ENCODE measurements at regions of chr6 and their contacts with region 1.

Region 1: GRCh38 chr6:122471107-122472021 is at the start of gene SERINC1:
- DNase-seq: peak; percentile 95
- ATAC-seq: peak; percentile 97
- H3K4me3 Mint-ChIP-seq: peak within 1 kb of the TSS; percentile 96
- H3K27ac Mint-ChIP-seq: peak within 1 kb of the TSS; percentile 100
- H3K4me1 Mint-ChIP-seq: peaks cover 31% of the 10 kb centered on the region
- H3K27me3 Mint-ChIP-seq: no peaks in the 10 kb centered on the region
- total RNA-seq, gene SERINC1: 35.2 to 46.3 TPM

Region 2: DNA sequence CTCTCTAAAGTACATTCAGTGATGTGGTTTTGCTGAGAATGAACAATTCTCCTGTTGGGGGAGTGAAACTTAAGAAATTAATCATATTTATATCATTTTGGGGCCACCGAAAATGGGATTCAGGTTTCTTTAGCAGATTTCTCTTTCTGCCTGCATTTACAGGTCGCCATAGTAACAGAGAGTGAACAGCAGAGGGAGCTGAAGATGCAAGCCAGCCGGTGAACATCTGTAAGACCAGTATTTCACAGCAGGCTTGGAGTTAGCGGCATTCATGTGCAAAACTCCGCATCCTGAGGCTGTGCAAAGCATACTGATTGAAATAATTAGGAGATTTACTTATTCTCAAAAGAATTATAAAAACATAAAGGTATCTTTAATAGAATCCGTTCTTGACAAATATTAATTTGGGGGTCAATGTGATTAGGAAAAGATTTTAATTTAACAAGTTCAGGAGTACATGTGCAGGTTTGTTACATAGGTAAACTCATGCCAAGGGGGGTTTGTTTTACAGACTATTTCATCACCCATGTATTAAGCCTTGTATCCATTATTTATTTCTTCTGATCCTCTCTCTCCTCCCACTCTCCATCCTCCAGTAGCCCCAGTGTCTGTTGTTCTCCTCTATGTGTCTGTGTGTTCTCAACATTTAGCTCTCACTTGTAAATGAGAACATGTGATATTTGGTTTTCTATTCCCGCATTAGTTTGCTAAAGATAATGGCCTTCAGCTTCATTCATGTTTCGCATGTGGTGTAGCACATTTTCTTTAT is 89.7 kb before region 1 on chr6:
- CTCF ChIA-PET with region 1: interaction called, 3 read pairs
- POLR2A ChIA-PET with region 1: no interaction called
- intact Hi-C with region 1: loop called (anchors 1 kb)
- DNase-seq: peak; percentile 74
- ATAC-seq: peak; percentile 99
- H3K4me3 Mint-ChIP-seq: no peak overlapping the region
- H3K27ac Mint-ChIP-seq: no peak overlapping the region
- H3K4me1 Mint-ChIP-seq: peaks cover 6% of the 10 kb centered on the region
- H3K27me3 Mint-ChIP-seq: peaks cover 8% of the 10 kb centered on the region

Region 3: GRCh38 chr6:122408702-122409458 is 62.5 kb before region 1 on chr6:
- CTCF ChIA-PET with region 1: interaction called, 3 read pairs
- POLR2A ChIA-PET with region 1: no interaction called
- intact Hi-C with region 1: loop called in 1 of 2 experiments (anchors 2 kb)
- DNase-seq: no peak
- ATAC-seq: peak; percentile 79
- H3K4me3 Mint-ChIP-seq: peak overlapping the region; percentile 74
- H3K27ac Mint-ChIP-seq: peak overlapping the region; percentile 99
- H3K4me1 Mint-ChIP-seq: peaks cover 75% of the 10 kb centered on the region
- H3K27me3 Mint-ChIP-seq: no peaks in the 10 kb centered on the region

Region 4: DNA sequence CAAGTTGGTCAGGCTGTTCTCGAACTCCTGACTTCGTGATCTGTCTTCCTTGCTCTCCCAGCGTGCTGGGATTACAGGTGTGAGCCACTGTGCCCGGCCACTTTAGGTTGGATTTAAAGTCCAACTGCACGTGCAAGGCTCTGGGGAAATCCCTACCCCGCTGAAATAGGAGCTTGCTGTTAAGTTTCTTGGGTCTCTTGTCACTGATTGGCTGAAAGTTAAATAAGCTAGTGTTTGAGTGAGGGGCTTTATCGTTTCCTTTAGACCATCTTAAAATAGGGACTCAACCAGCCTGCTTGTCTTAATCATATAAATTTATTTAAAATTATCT is 11.4 kb after region 1 on chr6:
- CTCF ChIA-PET with region 1: no interaction called
- POLR2A ChIA-PET with region 1: no interaction called
- intact Hi-C with region 1: no loop called
- DNase-seq: no peak
- ATAC-seq: no peak
- H3K4me3 Mint-ChIP-seq: peak overlapping the region; percentile 57
- H3K27ac Mint-ChIP-seq: no peak overlapping the region
- H3K4me1 Mint-ChIP-seq: no peaks in the 10 kb centered on the region
- H3K27me3 Mint-ChIP-seq: no peaks in the 10 kb centered on the region

Region 5: DNA sequence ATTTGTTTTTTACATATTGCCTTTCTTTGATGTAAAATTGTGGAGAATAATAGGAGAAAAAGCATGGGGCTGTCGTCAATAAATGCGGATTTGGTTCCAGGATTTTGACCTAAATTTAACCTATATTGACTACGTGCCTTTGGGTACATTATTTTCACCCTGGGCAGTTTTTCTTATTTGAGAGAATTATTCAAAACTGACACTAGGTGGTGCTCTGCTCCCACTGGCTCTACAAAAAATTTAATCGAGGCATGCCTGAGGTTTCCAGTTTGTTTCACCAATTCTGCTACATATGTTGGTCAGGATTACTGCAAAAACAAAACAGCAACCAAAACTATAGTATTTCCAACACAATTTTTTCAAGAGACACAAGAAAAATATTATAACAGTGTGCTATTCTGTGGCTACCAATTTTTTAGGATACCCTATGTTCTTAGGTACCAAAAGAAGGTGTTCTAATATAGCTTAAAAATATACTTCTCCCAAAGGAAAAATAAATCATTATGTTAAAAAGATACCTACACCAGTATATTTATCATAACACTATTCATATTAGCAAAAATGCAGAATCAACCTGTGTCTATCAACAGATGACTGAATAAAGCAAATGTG is 259.5 kb after region 1 on chr6:
- CTCF ChIA-PET with region 1: no interaction called
- POLR2A ChIA-PET with region 1: no interaction called
- intact Hi-C with region 1: loop called in 1 of 2 experiments (anchors 5 kb)
- DNase-seq: peak; percentile 25
- ATAC-seq: no peak
- H3K4me3 Mint-ChIP-seq: no peak overlapping the region
- H3K27ac Mint-ChIP-seq: no peak overlapping the region
- H3K4me1 Mint-ChIP-seq: no peaks in the 10 kb centered on the region
- H3K27me3 Mint-ChIP-seq: peaks cover 2% of the 10 kb centered on the region

Region 6: DNA sequence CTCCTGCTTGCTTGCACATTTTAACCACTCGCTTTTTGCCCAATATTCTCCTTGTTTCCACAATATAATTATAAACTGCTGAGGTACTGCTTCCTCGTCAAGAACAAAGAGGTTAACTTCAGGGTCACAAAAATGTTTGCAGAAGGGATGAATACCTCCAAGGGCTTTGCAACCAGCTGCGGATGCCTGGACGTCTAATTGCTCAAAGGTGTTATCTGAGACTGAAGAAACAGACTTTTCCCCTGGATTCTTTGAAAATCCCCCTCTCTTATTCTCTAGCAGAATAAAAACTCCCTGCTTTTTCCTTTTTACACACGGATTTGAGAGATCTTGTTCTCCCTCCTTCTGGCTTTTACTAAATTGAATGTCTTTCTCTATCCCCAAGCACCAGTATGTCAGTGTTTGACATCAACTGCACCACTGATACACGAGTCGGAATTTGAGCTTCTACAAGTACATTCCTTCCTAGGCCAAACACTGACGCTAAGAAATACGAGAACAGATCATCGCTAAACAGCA is 317.4 kb after region 1 on chr6:
- CTCF ChIA-PET with region 1: no interaction called
- POLR2A ChIA-PET with region 1: no interaction called
- intact Hi-C with region 1: no loop called
- DNase-seq: no peak
- ATAC-seq: no peak
- H3K4me3 Mint-ChIP-seq: peak overlapping the region; percentile 72
- H3K27ac Mint-ChIP-seq: no peak overlapping the region
- H3K4me1 Mint-ChIP-seq: peaks cover 16% of the 10 kb centered on the region
- H3K27me3 Mint-ChIP-seq: peaks cover 51% of the 10 kb centered on the region

Region 7: GRCh38 chr6:123316733-123317323 is 845.5 kb after region 1 on chr6:
- CTCF ChIA-PET with region 1: no interaction called
- POLR2A ChIA-PET with region 1: no interaction called
- intact Hi-C with region 1: loop called in 1 of 2 experiments (anchors 5 kb)
- DNase-seq: no peak
- ATAC-seq: no peak
- H3K4me3 Mint-ChIP-seq: no peak overlapping the region
- H3K27ac Mint-ChIP-seq: no peak overlapping the region
- H3K4me1 Mint-ChIP-seq: no peaks in the 10 kb centered on the region
- H3K27me3 Mint-ChIP-seq: peaks cover 3% of the 10 kb centered on the region